ENCODE measurements at regions of chr1 and their contacts with region 1.

Region 1: GRCh38 chr1:200971955-200972711 is 51.4 kb downstream of the KIF21B start:
- DNase-seq: peak; percentile 83
- ATAC-seq: peak; percentile 57
- H3K4me3 Mint-ChIP-seq: no peak overlapping the region
- H3K27ac Mint-ChIP-seq: no peak overlapping the region
- H3K4me1 Mint-ChIP-seq: no peaks in the 10 kb centered on the region; the same call in 1 of the 2 replicates
- H3K27me3 Mint-ChIP-seq: no peaks in the 10 kb centered on the region
- CTCF ChIP-seq: peak; percentile 100

Region 2: GRCh38 chr1:200890818-200891773 is 81.0 kb before region 1 on chr1:
- CTCF ChIA-PET with region 1: interaction called, 23 read pairs
- POLR2A ChIA-PET with region 1: no interaction called
- DNase-seq: peak; percentile 80
- ATAC-seq: peak; percentile 32
- H3K4me3 Mint-ChIP-seq: peak overlapping the region; percentile 88
- H3K27ac Mint-ChIP-seq: peak overlapping the region; percentile 94
- H3K4me1 Mint-ChIP-seq: peaks cover 71% of the 10 kb centered on the region
- H3K27me3 Mint-ChIP-seq: peaks cover 3% of the 10 kb centered on the region; the same call in 1 of the 2 replicates
- CTCF ChIP-seq: no peak

Region 3: GRCh38 chr1:200959411-200959921 is 12.7 kb before region 1 on chr1:
- CTCF ChIA-PET with region 1: interaction called, 18 read pairs
- POLR2A ChIA-PET with region 1: no interaction called
- DNase-seq: no peak
- ATAC-seq: peak; percentile 88
- H3K4me3 Mint-ChIP-seq: no peak overlapping the region
- H3K27ac Mint-ChIP-seq: no peak overlapping the region
- H3K4me1 Mint-ChIP-seq: peaks cover 6% of the 10 kb centered on the region; the same call in 1 of the 2 replicates
- H3K27me3 Mint-ChIP-seq: peaks cover 5% of the 10 kb centered on the region; the same call in 1 of the 2 replicates
- CTCF ChIP-seq: no peak

Region 4: DNA sequence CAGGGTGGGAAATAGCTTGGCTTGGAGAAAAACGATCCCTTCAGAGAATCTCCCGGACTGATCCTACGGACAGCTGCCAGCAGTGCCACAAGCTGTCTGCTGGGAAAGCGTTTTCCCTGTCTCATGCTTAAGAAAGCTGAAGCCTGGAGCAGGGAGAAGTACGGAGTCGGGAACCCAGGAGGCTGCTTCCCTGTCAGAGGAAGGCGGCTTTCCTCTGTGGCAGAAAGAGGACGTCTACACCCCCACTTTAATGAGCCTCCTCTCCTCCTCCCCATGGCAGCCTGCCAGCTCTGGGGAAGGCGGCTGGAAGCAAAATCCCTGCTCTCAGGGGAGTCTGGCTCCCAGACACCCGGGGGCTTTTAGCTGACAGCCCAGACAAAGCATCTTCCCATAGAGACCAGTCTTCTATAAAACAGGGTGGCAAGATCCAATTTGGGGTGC is 44.1 kb after region 1 on chr1:
- CTCF ChIA-PET with region 1: interaction called, 218 read pairs
- POLR2A ChIA-PET with region 1: interaction called, 5 read pairs
- DNase-seq: no peak
- ATAC-seq: no peak
- H3K4me3 Mint-ChIP-seq: no peak overlapping the region
- H3K27ac Mint-ChIP-seq: no peak overlapping the region
- H3K4me1 Mint-ChIP-seq: peaks cover 51% of the 10 kb centered on the region
- H3K27me3 Mint-ChIP-seq: no peaks in the 10 kb centered on the region
- CTCF ChIP-seq: no peak

Region 5: GRCh38 chr1:201069636-201070035 is 97.5 kb after region 1 on chr1:
- CTCF ChIA-PET with region 1: interaction called, 11 read pairs
- POLR2A ChIA-PET with region 1: no interaction called
- DNase-seq: no peak
- ATAC-seq: peak; percentile 64
- H3K4me3 Mint-ChIP-seq: no peak overlapping the region
- H3K27ac Mint-ChIP-seq: no peak overlapping the region
- H3K4me1 Mint-ChIP-seq: peaks cover 10% of the 10 kb centered on the region
- H3K27me3 Mint-ChIP-seq: no peaks in the 10 kb centered on the region
- CTCF ChIP-seq: no peak

Region 6: GRCh38 chr1:201119206-201120197 is 147.4 kb after region 1 on chr1:
- CTCF ChIA-PET with region 1: interaction called, 76 read pairs
- POLR2A ChIA-PET with region 1: no interaction called
- DNase-seq: peak; percentile 77
- ATAC-seq: peak; percentile 74
- H3K4me3 Mint-ChIP-seq: no peak overlapping the region
- H3K27ac Mint-ChIP-seq: no peak overlapping the region
- H3K4me1 Mint-ChIP-seq: peaks cover 10% of the 10 kb centered on the region
- H3K27me3 Mint-ChIP-seq: peaks cover 53% of the 10 kb centered on the region
- CTCF ChIP-seq: peak; percentile 71

Measured in WTC11 (cell line).